ENCODE measurements at regions of chr9 and their contacts with region 1.

Region 1: DNA sequence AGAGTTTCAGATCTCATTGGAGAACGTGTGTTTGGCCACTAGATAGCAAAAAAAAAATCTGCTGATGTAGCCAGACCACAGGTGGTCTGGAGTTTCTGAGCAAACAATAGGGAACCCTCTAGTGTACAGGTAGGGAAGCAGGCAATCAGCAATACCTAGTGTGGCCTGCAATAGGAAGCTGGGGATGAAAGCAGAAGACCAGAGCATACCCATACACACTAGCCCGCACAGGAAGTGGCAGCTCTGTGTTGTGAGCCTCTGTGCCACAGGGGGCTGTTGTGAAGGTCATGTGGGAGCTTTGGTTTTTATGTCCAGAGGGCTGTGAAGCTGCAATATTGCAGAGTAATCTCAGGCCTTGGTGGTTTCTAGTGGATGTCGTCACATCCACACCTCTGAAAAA is 81.2 kb downstream of the MTAP start:
- DNase-seq: peak; percentile 6
- ATAC-seq: no peak
- H3K4me3 Mint-ChIP-seq: no peak overlapping the region
- H3K27ac Mint-ChIP-seq: no peak overlapping the region
- H3K4me1 Mint-ChIP-seq: peaks cover 2% of the 10 kb centered on the region
- H3K27me3 Mint-ChIP-seq: no peaks in the 10 kb centered on the region
- CTCF ChIP-seq: no peak

Region 2: DNA sequence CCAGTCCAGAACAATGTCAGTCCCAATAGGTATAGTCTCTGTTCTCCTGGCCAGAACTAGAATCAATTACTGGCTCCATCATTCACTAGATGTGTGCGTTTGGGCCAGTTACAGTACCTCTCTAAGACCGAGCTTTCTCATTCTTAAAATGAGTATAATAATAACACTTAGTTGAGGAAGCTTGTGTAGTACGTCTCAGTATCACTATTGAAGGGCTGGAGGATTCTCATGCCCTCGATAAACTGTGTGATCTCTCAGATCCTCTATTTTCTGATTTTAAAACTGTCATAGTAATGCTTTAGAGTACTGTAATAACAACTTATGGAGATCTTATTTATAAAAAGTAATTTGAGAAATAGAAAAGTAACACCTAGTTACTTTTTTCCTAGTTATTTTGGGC is 59.8 kb after region 1 on chr9:
- CTCF ChIA-PET with region 1: no interaction called
- POLR2A ChIA-PET with region 1: no interaction called
- intact Hi-C with region 1: loop called (anchors 10 kb)
- DNase-seq: no peak
- ATAC-seq: no peak
- H3K4me3 Mint-ChIP-seq: no peak overlapping the region
- H3K27ac Mint-ChIP-seq: no peak overlapping the region
- H3K4me1 Mint-ChIP-seq: no peaks in the 10 kb centered on the region
- H3K27me3 Mint-ChIP-seq: peaks cover 22% of the 10 kb centered on the region
- CTCF ChIP-seq: no peak